ENCODE measurements at regions of chr3 and their contacts with region 1.

Region 1: GRCh38 chr3:108767253-108767652 is 10.0 kb upstream of the RETNLB start:
- DNase-seq: no peak
- ATAC-seq: no peak
- H3K4me3 ChIP-seq: no peak overlapping the region
- H3K27ac ChIP-seq: no peak overlapping the region
- H3K4me1 ChIP-seq: no peaks in the 10 kb centered on the region
- H3K27me3 ChIP-seq: no peaks in the 10 kb centered on the region; a peak in 1 of 4 replicates
- CTCF ChIP-seq: no peak
- EP300 ChIP-seq: no peak
- POLR2A ChIP-seq: no peak
- RAD21 ChIP-seq: no peak

Region 2: DNA sequence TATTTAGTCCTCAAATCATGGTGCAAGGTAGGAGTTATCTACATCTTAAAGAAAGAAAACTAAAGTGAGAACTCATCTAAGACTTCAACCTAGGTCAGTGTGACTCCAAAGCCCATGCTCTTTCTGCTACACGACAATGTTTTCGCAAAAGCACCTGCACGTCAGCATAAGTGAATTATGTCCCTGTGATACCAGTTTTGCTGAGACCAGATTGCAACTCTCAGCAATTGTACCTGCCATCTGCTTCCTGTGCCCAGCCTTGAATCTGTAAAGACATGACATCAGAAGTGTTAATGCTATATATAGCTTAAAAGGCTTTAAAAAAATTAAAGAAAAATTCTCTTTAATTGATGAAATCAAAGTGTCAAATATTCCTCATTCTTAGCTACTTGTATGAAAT is 53.4 kb before region 1 on chr3:
- CTCF ChIA-PET with region 1: no interaction called
- POLR2A ChIA-PET with region 1: no interaction called
- RAD21 ChIA-PET with region 1: no interaction called
- SMC1A ChIA-PET with region 1: no interaction called
- in situ Hi-C with region 1: no loop called
- intact Hi-C with region 1: loop called (anchors 10 kb)
- DNase-seq: no peak
- ATAC-seq: no peak
- H3K4me3 ChIP-seq: no peak overlapping the region
- H3K27ac ChIP-seq: no peak overlapping the region
- H3K4me1 ChIP-seq: no peaks in the 10 kb centered on the region
- H3K27me3 ChIP-seq: no peaks in the 10 kb centered on the region
- CTCF ChIP-seq: no peak
- EP300 ChIP-seq: no peak
- POLR2A ChIP-seq: no peak
- RAD21 ChIP-seq: no peak

Region 3: DNA sequence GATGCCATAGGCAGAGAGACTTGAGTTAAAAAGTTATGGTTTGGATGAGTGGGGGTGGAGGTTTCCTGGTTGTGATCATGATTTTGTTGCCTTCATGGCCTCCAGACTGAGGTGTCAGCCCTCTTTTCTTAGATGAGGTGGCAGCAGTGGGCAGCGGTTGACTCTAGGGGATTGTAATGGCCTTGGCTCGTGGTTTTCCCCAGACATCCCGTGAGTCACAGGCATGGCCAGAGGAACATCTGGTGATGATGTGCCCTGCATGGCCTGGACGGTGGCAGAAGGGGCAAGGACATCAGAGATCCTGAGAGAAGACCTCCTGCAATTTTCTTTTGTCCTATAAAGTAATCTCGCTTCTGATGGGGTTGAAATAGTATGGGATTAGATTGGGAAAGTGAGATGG is 22.5 kb before region 1 on chr3:
- CTCF ChIA-PET with region 1: no interaction called
- POLR2A ChIA-PET with region 1: no interaction called
- RAD21 ChIA-PET with region 1: no interaction called
- SMC1A ChIA-PET with region 1: no interaction called
- in situ Hi-C with region 1: no loop called
- intact Hi-C with region 1: no loop called
- DNase-seq: no peak
- ATAC-seq: no peak
- H3K4me3 ChIP-seq: no peak overlapping the region
- H3K27ac ChIP-seq: no peak overlapping the region
- H3K4me1 ChIP-seq: no peaks in the 10 kb centered on the region
- H3K27me3 ChIP-seq: no peaks in the 10 kb centered on the region
- CTCF ChIP-seq: no peak
- EP300 ChIP-seq: no peak
- POLR2A ChIP-seq: no peak
- RAD21 ChIP-seq: no peak